ENCODE measurements at regions of chr17 and their contacts with region 1.

Region 1: DNA sequence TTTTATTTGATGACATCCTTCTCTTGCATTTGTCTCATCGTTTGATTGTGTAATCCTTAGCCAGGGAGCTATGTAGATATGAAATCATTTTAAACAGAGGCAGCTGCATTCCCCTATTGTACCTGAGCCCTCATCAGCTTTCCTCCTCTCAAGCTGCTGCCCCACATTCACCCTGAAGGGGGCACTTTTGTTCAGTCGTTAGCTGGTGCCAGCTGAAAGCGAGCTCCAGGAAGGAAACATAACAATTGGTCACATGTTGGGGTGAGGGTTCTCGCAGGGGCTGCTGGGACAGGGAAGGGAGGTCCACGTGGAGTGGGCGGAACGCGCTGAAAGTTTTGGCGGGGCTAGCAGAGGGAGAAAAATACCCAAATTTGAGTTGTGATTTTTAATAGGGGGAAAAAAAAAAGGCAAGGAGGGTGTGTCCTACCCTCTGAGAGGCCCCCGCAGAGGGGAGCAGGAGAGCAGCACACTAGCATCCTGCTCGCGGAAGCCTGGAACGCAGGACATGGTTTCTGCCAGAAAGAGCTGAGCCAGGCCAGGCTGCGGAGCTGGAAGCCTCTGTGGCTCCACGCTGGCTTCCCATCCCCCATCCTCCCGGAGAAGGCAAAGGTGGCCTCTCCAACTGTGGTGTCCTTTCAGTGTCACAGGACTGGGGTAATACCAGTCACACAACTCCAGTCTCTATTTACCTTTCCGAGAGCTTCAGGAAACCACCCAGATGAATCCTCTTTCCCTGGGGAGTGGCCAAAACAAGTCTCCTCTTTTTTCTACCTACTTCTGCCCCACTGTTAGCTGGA is 8.5 kb upstream of the MSL1 start:
- DNase-seq: peak; percentile 98
- ATAC-seq: peak; percentile 67
- H3K4me3 ChIP-seq: peak overlapping the region; percentile 25 to 67 (median 39)
- H3K27ac ChIP-seq: peak overlapping the region; percentile 95
- H3K4me1 ChIP-seq: peaks cover 89% of the 10 kb centered on the region
- H3K27me3 ChIP-seq: no peaks in the 10 kb centered on the region
- CTCF ChIP-seq: peak; percentile 98
- EP300 ChIP-seq: peak; percentile 54 to 76; a peak in 3 of 4 replicates
- POLR2A ChIP-seq: peak; percentile 74 to 93; a peak in 3 of 4 replicates
- RAD21 ChIP-seq: peak; percentile 90

Region 2: DNA sequence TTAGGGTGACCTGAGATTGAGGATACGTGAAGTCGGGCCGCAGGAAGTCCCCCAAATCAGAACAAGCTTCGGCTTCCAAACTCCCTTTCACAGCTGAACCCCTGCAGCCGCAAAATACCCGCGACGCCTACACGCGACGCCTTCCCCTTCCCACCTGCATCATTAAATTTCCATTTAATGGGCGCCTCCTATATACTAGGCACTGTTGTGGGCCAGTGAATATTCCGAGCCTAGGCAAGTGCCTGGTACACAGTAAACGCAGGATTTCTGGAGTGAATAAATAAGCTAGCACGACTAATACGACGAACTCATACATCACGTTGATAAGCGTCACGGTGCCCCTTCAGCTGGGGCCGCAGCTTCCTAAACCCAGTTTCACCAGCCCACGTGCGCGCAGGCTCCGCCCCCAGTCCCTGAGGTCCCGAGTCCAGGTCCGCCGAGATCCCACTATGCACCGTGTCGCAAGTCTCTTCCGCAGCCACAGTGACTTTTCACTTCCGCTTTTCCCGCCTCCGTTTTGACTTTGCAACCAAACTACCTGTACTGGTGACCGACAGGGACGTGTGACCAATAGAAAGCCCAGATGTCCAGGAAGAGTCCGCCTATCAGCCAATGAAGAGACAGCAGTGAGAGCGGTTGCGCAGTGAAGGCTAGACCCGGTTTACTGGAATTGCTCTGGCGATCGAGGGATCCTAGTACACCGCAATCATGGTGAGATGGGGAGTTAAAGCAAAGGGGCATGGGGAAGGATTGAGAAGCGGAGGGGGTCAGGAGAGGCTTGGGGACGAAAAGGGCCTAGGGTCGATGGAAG is 1361.0 kb before region 1 on chr17 and contains the start of gene PSMB3:
- CTCF ChIA-PET with region 1: no interaction called
- POLR2A ChIA-PET with region 1: no interaction called
- in situ Hi-C with region 1: no loop called
- intact Hi-C with region 1: loop called (anchors 5 kb)
- DNase-seq: peak; percentile 100
- ATAC-seq: peak; percentile 86
- H3K4me3 ChIP-seq: peak within 1 kb of the TSS; percentile 82 to 93 (median 84)
- H3K27ac ChIP-seq: peak within 1 kb of the TSS; percentile 81
- H3K4me1 ChIP-seq: peaks cover 30% of the 10 kb centered on the region
- H3K27me3 ChIP-seq: no peaks in the 10 kb centered on the region; a peak in 1 of 5 replicates
- CTCF ChIP-seq: peak; percentile 2; the same call in 1 of the 2 replicates
- EP300 ChIP-seq: 0 out of 4 replicates have a peak, but pooled peaks of 1 of the 2 experiments have one; percentile 15
- POLR2A ChIP-seq: peak; percentile 77 to 82
- RAD21 ChIP-seq: no peak
- total RNA-seq, gene PSMB3: 517 and 688 TPM in 2 replicates

Region 3: DNA sequence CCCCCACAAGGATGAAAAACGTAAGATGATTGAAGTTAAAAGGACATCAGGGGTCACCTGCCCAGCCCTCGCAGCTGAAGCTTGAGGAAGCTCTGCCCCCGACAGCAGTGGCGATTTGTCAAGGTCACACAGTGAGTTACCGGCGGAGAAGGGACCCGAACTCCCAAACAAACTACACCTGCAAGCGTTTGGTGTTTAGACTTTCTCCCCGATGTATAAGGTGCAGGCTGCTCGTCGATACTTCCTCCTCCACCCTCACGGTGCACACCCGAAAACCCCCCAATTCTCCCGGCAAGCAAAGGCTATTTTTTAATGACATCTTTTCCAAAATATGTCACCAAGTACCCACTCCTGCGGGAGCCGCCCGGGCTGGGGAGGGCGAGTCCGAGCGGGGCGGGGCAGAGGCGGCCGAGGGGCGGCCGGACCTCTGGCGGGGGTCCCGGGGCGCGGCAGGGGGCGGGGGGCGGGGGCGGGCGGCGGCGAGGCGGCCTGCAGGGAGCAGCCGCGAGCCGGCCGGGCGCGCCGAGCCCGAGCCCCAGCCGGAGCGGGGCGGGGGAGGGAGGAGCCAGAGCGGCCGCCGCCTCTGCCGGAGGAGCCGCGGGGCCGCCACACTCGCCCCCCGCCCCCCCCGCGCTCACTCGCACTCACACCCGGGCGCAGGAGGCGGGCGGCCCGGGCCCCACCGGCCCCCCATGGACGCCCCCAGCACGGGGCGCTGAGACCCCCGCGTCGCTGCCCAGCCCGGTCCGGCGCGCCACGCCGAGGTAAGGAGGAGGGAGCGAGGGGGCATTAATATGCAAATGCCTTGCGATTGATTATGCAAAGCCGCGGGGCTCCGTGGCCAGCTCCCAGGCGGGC is 50.8 kb before region 1 on chr17 and contains the start of gene THRA:
- CTCF ChIA-PET with region 1: interaction called, 11 read pairs
- POLR2A ChIA-PET with region 1: interaction called, 28 read pairs
- in situ Hi-C with region 1: no loop called
- intact Hi-C with region 1: loop called (anchors 1 kb)
- DNase-seq: no peak
- ATAC-seq: peak; percentile 73
- H3K4me3 ChIP-seq: peak within 1 kb of the TSS; percentile 92 to 99 (median 96)
- H3K27ac ChIP-seq: peak within 1 kb of the TSS; percentile 68
- H3K4me1 ChIP-seq: peaks cover 75% of the 10 kb centered on the region
- H3K27me3 ChIP-seq: peaks cover 4 to 28% of the 10 kb centered on the region in 2 experiments; a peak in 4 of 5 replicates
- CTCF ChIP-seq: peak; percentile 4
- EP300 ChIP-seq: no peak
- POLR2A ChIP-seq: no peak
- RAD21 ChIP-seq: peak; percentile 52; the same call in 1 of the 2 replicates
- total RNA-seq, gene THRA: 9.9 and 10.4 TPM in 2 replicates

Region 4: GRCh38 chr17:40086150-40087044 is 26.9 kb before region 1 on chr17:
- CTCF ChIA-PET with region 1: interaction called, 11 read pairs
- POLR2A ChIA-PET with region 1: interaction called, 9 read pairs
- in situ Hi-C with region 1: no loop called
- intact Hi-C with region 1: no loop called
- DNase-seq: peak; percentile 52
- ATAC-seq: peak; percentile 64
- H3K4me3 ChIP-seq: no peak overlapping the region
- H3K27ac ChIP-seq: no peak overlapping the region
- H3K4me1 ChIP-seq: 0 out of 2 replicates have a peak, but pooled peaks cover 13% of the 10 kb centered on the region
- H3K27me3 ChIP-seq: no peaks in the 10 kb centered on the region
- CTCF ChIP-seq: peak; percentile 91
- EP300 ChIP-seq: no peak
- POLR2A ChIP-seq: no peak
- RAD21 ChIP-seq: peak; percentile 97

Region 5: DNA sequence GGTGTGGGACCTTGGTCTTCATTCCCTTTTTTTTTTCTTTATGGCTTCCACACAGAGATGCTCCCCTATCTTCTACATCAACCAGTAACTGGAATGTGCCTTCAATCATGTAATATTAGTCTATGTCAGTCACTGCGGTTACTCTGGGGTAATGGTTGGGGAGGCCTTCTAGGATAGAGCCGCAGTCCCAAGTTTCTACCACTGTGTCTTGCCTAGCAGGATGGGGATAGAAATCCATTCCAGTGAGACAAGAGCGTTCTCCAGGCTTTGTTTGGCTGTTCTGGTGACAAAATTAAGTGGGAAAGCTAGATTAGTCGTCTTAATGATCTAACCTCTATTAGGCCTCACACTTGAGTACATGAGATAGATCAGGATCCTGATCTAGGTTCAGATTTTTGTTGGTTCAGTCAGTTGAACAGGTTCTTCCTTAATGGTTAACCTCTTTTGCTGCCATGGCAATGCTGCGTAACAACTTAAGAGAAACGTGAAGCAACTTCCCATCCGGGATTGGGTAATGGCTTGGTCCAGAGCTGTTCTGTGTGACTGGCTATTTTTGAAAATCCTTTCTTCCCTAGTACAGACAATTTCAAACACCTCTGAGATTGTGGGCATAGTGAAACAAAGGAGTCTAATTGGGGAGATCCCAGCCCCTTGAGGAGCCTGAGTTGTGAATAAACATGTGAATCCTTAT is 17.2 kb after region 1 on chr17:
- CTCF ChIA-PET with region 1: no interaction called
- POLR2A ChIA-PET with region 1: interaction called, 150 read pairs
- in situ Hi-C with region 1: no loop called
- intact Hi-C with region 1: no loop called
- DNase-seq: no peak
- ATAC-seq: no peak
- H3K4me3 ChIP-seq: no peak overlapping the region
- H3K27ac ChIP-seq: peak overlapping the region; percentile 3
- H3K4me1 ChIP-seq: peaks cover 23% of the 10 kb centered on the region
- H3K27me3 ChIP-seq: no peaks in the 10 kb centered on the region
- CTCF ChIP-seq: no peak
- EP300 ChIP-seq: no peak
- POLR2A ChIP-seq: no peak
- RAD21 ChIP-seq: no peak

Region 6: GRCh38 chr17:40191237-40192208 is 78.2 kb after region 1 on chr17:
- CTCF ChIA-PET with region 1: interaction called, 5 read pairs
- POLR2A ChIA-PET with region 1: interaction called, 12 read pairs
- in situ Hi-C with region 1: no loop called
- intact Hi-C with region 1: no loop called
- DNase-seq: peak; percentile 71
- ATAC-seq: peak; percentile 76
- H3K4me3 ChIP-seq: peak overlapping the region; percentile 61 to 80 (median 79)
- H3K27ac ChIP-seq: peak overlapping the region; percentile 53
- H3K4me1 ChIP-seq: peaks cover 37% of the 10 kb centered on the region
- H3K27me3 ChIP-seq: no peaks in the 10 kb centered on the region
- CTCF ChIP-seq: peak; percentile 96
- EP300 ChIP-seq: no peak
- POLR2A ChIP-seq: no peak
- RAD21 ChIP-seq: peak; percentile 50

Region 7: DNA sequence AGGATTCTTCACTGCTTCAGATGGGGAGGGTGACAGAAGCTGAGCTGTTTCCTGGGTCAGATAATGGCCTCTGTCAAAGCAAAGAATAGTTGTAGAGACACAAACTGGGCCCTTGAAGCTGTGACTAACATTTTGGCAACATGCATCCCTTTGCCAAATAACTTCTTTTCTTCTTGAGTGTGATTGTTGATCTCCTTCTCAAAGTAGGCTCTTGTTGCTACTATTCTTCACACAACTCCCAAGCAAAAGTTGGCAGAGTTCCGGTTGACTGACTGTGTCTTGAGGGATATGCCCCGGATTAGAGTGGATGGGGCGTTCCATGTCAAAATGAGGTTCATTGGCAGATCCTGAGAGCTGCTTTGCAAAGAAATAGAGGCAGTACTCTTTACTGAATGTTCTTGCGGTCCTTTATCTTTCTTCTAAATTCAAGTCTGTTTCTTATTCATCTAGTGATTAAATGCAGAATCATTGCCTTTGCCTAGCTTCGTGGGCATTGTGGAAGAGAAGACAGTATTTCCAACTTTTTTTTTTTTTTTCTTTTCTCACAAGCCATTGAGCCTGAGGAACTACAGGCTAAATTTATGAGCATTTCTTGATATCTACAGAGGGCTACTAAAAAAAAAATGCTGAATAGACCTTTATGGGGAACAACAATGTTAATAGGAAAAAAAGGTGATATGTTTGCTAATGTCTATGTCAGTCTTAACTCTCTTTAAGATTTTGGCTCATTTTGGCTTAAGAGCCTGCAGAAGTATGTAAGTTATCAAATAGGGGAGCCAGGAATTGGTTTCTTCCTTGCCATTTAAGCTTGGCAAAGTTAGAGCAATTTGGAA is 111.6 kb after region 1 on chr17:
- CTCF ChIA-PET with region 1: no interaction called
- POLR2A ChIA-PET with region 1: no interaction called
- in situ Hi-C with region 1: no loop called
- intact Hi-C with region 1: no loop called
- DNase-seq: no peak
- ATAC-seq: no peak
- H3K4me3 ChIP-seq: no peak overlapping the region
- H3K27ac ChIP-seq: no peak overlapping the region
- H3K4me1 ChIP-seq: peaks cover 19% of the 10 kb centered on the region
- H3K27me3 ChIP-seq: no peaks in the 10 kb centered on the region; a peak in 1 of 5 replicates
- CTCF ChIP-seq: no peak
- EP300 ChIP-seq: no peak
- POLR2A ChIP-seq: no peak
- RAD21 ChIP-seq: no peak

Region 8: DNA sequence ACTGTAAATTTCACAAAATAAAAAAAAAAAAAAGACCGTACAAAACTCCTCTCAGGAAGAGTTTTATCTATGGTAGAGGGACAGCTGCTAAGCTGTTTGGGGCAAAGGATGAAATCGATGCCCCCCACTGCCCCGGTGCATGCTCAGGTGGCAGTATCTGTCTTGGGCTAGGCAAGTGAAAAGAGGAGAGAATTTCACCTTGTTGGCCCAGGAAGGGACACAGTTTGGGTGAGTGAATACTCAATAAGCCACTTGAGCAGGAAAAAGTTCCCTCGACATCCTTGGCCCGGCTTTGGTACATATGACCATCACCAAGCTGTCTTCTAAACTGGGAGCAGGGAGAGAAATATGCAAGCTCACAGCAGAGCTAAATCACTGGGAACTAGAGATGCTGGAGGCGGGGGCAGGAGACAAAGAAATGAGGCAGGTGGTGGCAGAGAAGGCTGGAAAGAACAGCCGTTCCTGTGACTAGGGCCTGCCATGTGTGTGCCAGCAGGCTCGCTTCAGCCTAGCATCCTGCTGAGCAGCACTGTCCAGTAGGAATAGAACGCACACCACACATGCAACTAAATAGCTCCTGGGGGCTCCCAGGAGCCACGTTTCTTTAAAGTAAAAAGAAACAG is 1567.2 kb after region 1 on chr17:
- CTCF ChIA-PET with region 1: no interaction called
- POLR2A ChIA-PET with region 1: no interaction called
- in situ Hi-C with region 1: no loop called
- intact Hi-C with region 1: no loop called
- DNase-seq: no peak
- ATAC-seq: no peak
- H3K4me3 ChIP-seq: no peak overlapping the region
- H3K27ac ChIP-seq: no peak overlapping the region
- H3K4me1 ChIP-seq: peaks cover 39% of the 10 kb centered on the region
- H3K27me3 ChIP-seq: peaks cover 2 to 8% of the 10 kb centered on the region in 2 experiments; a peak in 4 of 5 replicates
- CTCF ChIP-seq: no peak
- EP300 ChIP-seq: no peak
- POLR2A ChIP-seq: no peak
- RAD21 ChIP-seq: no peak